ENCODE measurements at regions of chr20 and their contacts with region 1.

Region 1: DNA sequence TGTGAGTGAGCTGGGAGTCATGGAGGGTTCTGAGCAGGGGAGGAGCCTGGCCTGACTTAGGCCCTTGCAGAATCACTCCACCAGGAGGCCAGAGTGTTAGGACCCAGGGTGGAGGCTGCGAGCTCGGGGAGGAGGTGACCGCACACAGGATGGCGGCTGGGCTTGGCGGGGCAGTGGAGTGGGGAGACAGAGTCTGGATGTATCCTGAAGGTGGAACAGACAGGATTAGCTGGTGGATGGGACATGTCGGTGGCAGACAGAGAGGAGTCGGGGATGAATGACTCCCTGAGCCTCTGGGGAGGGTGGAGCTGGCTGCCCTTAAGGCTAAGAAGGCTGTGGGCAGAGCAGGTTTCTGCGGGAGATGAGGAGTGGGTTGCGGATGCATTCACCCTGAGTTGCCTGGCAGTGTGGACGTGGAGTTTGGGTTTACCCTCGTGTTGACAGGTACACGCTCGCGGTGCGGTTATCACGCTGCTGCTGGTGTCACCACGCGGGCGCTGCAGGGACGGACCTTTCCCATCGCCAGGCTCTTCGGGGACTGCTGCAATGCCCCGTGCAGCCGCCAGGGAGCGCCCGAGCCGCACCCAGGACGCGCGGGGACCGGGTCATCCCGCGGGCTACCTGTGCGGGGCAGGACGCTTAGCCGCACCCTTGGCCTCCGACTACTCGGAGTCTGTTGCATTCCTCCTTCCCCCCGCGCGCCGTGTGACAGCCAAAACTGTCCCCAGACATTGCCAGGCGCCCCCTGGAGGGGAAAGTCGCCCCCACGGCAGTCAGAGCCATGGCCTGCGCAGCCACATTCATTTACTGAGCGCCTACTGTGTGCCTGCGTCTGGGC is 43.0 kb upstream of the PTGIS start:
- DNase-seq: no peak
- H3K4me3 ChIP-seq: peak overlapping the region; percentile 46
- CTCF ChIP-seq: peak; percentile 95

Region 2: DNA sequence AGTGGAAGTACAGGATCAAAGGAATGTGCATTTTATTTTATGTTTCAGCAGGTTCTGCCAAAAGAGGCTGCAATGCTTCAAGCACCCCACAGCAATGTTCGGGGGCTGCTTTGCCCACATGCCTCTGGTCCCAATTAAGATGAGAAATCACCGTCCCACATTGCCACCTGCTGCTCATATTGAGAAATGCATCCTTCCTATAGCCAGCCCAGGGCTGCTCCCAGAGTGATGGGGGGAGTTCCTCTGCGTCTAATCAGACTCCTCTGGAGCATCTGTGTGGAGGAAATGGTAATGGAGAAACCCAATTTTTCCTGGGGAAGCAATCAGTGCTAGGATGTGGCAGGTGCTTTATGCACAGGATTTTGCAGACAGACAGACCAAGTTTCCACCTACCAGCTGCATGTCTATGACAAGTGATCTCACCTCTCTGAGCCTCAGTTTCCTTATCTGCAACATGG is 76.6 kb before region 1 on chr20:
- CTCF ChIA-PET with region 1: interaction called, 626 read pairs
- POLR2A ChIA-PET with region 1: no interaction called
- DNase-seq: no peak
- H3K4me3 ChIP-seq: no peak overlapping the region
- CTCF ChIP-seq: peak; percentile 74

Region 3: DNA sequence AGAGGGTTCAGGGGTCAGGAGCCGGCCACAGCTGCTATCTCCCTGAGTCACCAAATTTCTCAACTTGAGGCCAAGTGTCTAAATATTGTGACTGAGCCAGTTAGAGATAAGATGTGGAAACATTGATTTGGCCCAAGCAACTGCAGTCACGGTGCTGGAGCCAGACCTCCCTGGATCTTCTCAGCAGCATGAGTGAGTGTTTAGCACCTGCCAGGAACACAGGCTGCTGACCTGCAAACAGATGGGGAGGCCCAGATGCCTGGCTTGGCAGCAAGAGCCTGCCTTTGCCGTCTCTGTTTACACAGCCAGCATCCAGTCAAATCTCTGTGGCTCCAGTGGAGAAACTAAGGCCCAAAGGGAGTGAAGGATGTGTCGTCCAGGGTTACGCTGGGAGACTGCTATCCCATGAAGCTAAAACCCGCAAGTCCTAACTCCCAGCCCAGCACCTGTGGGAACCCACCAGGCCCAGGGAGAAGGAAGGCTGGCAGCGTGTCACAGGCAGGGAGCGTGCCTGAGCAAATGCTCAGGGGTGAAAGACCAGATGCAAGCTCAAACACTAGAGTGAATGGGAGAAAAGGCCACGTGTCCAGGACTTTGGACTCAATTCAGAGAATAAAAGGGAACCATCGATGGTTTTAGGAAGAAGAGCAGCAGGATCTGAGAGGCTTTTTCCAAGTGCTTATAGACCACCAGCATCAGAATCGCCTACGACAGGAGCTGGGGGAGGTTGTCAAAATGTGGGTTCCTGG is 27.1 kb before region 1 on chr20:
- CTCF ChIA-PET with region 1: interaction called, 44 read pairs
- POLR2A ChIA-PET with region 1: no interaction called
- DNase-seq: no peak
- H3K4me3 ChIP-seq: no peak overlapping the region
- CTCF ChIP-seq: no peak

Region 4: DNA sequence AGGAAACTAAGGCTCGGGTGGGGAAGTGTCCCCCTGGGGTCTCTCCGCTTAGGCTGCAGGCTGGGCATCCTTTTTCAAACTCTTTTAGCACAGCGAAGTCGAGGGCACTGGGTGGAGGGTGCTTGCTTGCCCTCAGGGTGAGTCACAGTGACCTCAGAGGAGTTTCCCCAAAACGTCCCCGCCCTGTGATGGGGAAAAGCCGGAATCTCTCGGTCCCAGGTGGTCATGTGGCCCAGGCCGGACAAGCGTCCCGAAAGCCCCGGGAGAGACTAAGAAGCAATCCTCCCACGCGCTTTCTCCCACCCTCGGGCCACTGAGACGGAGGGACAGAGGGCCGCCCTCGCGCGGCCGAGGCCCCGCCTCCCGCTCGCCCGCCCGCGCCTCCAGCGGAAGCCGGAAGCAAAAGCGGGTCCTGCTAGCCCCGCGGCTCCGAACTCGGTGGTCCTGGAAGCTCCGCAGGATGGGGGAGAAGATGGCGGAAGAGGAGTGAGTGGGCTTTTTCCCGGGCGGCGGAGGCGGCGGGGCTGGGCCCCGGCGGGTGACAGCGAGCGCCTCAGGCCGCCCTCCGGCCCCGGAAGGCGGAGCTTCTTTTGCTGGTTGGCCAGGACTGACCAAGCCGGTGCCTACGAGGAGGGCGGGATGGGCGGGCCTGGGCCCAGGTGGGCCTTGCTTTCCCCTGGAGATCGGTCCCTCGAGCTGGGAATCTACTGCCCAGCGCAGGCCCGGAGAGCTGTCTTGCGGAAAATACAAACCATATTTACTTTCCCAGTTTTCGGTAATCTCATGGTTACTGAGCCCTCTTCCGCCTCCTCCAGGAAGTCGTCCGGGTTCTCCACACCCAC is 201.8 kb after region 1 on chr20 and contains the start of gene SLC9A8:
- CTCF ChIA-PET with region 1: interaction called, 11 read pairs
- POLR2A ChIA-PET with region 1: interaction called, 4 read pairs
- DNase-seq: no peak
- H3K4me3 ChIP-seq: peak within 1 kb of the TSS; percentile 80
- CTCF ChIP-seq: peak; percentile 52

Region 5: DNA sequence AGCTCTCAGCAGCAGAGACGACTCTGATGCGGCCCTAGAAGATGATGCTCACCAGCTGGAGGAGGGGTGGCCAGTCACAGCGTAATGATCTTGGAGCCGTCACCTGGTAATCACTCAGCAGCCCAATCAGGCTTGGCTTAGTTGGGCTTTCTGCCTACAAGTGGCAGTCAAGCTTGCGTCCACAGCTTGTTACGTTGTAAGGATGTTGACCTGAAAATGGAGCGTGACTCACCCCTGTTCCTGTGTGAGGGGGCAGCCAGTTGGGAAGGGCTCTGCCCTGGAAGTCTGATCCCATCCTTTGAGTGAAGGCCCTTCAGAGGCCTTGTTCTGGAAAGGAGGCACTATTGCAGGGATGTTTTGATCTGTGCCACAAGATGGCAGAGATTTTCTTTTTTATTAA is 254.6 kb after region 1 on chr20:
- CTCF ChIA-PET with region 1: interaction called, 12 read pairs
- POLR2A ChIA-PET with region 1: no interaction called
- DNase-seq: no peak
- H3K4me3 ChIP-seq: no peak overlapping the region
- CTCF ChIP-seq: no peak

Region 6: GRCh38 chr20:50215101-50215690 is 604.3 kb after region 1 on chr20:
- CTCF ChIA-PET with region 1: no interaction called
- POLR2A ChIA-PET with region 1: no interaction called
- DNase-seq: no peak
- H3K4me3 ChIP-seq: no peak overlapping the region
- CTCF ChIP-seq: no peak

Region 7: DNA sequence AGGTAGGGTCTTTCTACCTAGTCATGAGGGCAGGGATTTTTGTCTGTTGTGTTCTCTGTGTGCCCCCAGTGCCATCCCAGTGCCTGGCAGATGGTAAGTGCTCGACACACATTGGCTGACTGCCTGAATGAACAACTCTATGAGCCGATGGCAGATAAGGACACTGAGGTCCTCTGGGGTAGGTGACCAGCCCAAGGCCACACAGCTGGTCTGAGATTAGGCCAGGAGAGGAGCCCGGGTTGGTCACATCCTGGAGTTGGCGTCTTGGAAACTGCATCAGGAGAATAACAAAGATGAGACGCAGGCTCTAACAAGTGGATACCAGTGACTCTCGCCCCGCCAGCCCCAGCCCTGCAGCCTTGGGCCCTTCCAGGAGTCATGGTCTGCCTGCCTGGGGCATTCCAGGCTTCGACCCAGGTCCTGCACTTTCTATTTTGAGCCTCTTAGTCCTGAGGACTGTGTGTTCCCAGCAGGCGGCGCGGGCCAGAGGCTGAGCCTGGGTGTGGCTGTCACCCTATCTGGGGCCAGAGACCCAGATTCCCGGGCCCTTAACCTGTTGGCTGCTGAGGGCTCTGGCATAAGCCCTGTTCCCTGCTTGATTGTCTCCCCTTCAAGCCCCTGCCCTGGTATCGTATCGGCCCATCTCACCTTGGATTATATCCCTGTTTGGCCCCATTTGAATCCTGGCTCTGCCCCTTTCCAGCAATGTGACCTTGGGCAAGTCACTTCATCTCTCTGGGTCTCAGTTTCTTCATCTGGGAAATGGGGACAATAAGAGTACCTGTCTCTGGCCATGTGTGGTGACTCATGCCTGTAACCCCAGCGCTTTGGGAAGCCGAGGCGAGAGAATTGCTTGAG is 668.0 kb after region 1 on chr20:
- CTCF ChIA-PET with region 1: no interaction called
- POLR2A ChIA-PET with region 1: no interaction called
- DNase-seq: no peak
- H3K4me3 ChIP-seq: no peak overlapping the region
- CTCF ChIP-seq: no peak